OCI-LY7 (cell line): ENCODE measurements at regions of chr9 and their contacts with region 1.

Region 1: GRCh38 chr9:37239224-37239859 is 119.0 kb downstream of the ZCCHC7 start:
- DNase-seq: no peak
- H3K4me3 ChIP-seq: no peak overlapping the region
- H3K27ac ChIP-seq: no peak overlapping the region
- H3K4me1 ChIP-seq: peaks cover 36% of the 10 kb centered on the region
- CTCF ChIP-seq: no peak

Region 2: GRCh38 chr9:37251452-37251851 is 12.1 kb after region 1 on chr9:
- CTCF ChIA-PET with region 1: interaction called, 3 read pairs
- POLR2A ChIA-PET with region 1: interaction called, 17 read pairs
- intact Hi-C with region 1: no loop called
- DNase-seq: no peak
- H3K4me3 ChIP-seq: no peak overlapping the region
- H3K27ac ChIP-seq: no peak overlapping the region
- H3K4me1 ChIP-seq: peaks cover 21% of the 10 kb centered on the region
- CTCF ChIP-seq: no peak